ENCODE measurements at regions of chr6 and their contacts with region 1.

Region 1: GRCh38 chr6:160088069-160088783 is 33.4 kb upstream of the SLC22A1 start:
- DNase-seq: no peak
- CTCF ChIP-seq: peak; percentile 34

Region 2: GRCh38 chr6:160041608-160042007 is 46.6 kb before region 1 on chr6:
- CTCF ChIA-PET with region 1: no interaction called
- POLR2A ChIA-PET with region 1: no interaction called
- DNase-seq: no peak
- CTCF ChIP-seq: no peak

Region 3: GRCh38 chr6:160102956-160103824 is 15.0 kb after region 1 on chr6:
- CTCF ChIA-PET with region 1: interaction called, 10 read pairs
- POLR2A ChIA-PET with region 1: no interaction called
- DNase-seq: no peak
- CTCF ChIP-seq: peak; percentile 40

Measured in GM10248 (cell line).